OCI-LY7 (cell line): ENCODE measurements at regions of chr13 and their contacts with region 1.

Region 1: DNA sequence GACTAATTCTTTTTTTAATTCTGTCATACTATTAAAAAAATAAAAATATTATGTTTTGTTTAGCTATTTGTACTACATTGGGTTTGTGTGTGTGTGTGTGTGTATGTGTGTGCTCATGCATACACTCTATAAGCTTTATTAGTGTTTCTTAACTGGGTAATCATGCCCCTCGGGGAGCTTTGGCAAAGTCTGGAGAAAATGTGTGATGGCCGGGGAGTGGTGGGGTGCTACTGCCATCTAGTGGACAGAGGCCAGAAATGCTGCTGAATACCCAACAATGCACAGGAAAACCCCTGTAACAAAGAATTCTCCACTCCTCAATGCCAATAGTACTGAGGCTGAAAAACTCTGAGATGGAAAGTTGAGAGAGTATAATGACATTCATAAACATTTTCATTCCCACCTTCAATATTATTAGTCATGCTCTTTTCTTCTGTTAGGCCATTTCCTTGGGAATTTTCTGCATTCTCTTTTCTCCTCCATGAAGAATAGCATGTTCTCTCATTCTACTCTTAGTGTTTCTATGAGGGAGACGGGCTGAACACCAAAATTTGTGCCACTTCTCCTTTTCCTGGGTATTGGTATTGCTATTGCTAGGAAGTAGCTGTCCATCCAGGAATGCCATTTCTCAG is 157.3 kb downstream of the DNAJC3 start:
- DNase-seq: peak; percentile 36
- H3K4me3 ChIP-seq: no peak overlapping the region
- H3K27ac ChIP-seq: no peak overlapping the region
- H3K4me1 ChIP-seq: no peaks in the 10 kb centered on the region
- CTCF ChIP-seq: peak; percentile 80

Region 2: GRCh38 chr13:95536632-95537241 is 297.5 kb before region 1 on chr13:
- CTCF ChIA-PET with region 1: interaction called, 4 read pairs
- POLR2A ChIA-PET with region 1: interaction called, 3 read pairs
- intact Hi-C with region 1: loop called (anchors 2 kb)
- DNase-seq: peak; percentile 27
- H3K4me3 ChIP-seq: no peak overlapping the region
- H3K27ac ChIP-seq: no peak overlapping the region
- H3K4me1 ChIP-seq: no peaks in the 10 kb centered on the region
- CTCF ChIP-seq: peak; percentile 73

Region 3: GRCh38 chr13:95624020-95624419 is 210.2 kb before region 1 on chr13:
- CTCF ChIA-PET with region 1: no interaction called
- POLR2A ChIA-PET with region 1: interaction called, 4 read pairs
- intact Hi-C with region 1: loop called (anchors 1 kb)
- DNase-seq: peak; percentile 38
- H3K4me3 ChIP-seq: no peak overlapping the region
- H3K27ac ChIP-seq: no peak overlapping the region
- H3K4me1 ChIP-seq: no peaks in the 10 kb centered on the region
- CTCF ChIP-seq: peak; percentile 72

Region 4: DNA sequence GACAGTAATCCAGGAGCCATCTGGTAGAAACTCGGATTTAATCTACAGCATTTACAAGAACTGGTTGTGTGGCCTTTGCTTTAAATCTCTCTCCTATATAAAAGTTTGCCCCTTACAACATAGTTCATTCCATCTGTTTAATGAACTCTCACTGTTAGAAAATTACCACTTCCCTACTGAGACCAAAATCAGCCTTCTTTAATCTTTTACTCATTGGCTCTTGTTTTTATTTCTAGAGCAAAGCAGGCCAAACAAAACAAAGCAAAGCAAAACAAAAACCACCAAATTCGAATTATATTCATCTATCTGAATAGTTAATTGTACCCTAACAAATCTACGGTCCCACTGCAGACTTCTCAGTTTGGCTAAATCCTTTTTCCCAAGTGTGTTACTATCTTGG is 92.0 kb after region 1 on chr13:
- CTCF ChIA-PET with region 1: no interaction called
- POLR2A ChIA-PET with region 1: no interaction called
- intact Hi-C with region 1: no loop called
- DNase-seq: no peak
- H3K4me3 ChIP-seq: no peak overlapping the region
- H3K27ac ChIP-seq: no peak overlapping the region
- H3K4me1 ChIP-seq: no peaks in the 10 kb centered on the region
- CTCF ChIP-seq: no peak